Dorsolateral prefrontal cortex (tissue), 120 donors: ENCODE measurements at regions of chr9 and their contacts with region 1.

Region 1: GRCh38 chr9:16119261-16120230 is 566.7 kb downstream of the CCDC171 start:
- DNase-seq: no peak
- H3K4me3 ChIP-seq: no peak overlapping the region
- H3K27ac ChIP-seq: peak overlapping the region in 1 of 59 donors; percentile 9
- H3K27me3 ChIP-seq: no peaks in the 10 kb centered on the region
- CTCF ChIP-seq: no peak

Region 2: DNA sequence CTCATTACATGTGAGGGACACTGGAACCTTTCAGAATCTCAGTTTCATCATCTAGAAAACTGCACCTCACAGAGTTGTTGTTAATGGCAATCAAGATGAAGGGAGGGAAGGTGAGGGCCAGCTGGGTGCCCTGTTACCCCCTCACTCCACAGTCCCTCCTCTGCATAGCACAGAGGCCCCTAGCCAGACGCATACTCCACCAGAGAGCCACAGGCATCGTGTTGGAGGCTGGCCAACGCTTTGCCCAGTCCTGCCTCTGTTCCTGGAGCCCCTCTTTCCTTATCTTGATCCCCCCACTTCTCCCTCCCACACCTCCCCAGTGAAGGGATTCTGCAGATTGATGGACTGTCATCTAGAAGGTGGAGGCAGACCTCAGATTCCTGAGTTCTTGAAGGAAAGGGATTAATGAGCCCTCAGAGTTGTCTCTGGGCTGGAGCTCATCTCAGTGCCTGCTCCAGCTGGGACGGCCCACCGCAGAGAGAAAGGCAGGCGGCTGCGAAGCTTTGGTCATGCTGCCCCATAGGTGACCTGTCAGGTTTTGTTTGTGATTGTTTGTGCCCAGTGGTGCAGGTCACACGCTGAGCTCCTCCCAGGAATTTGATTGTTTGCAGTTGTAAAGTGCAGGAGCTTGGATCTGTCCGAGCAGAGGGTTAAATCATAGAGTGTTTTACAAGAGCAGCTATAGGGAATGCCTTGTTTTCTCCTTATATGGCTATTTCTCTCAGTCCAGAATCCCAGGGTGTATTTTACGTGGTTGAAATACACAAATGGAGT is 79.4 kb before region 1 on chr9:
- intact Hi-C with region 1: loop called in 1 of 2 experiments (anchors 10 kb)
- DNase-seq: no peak
- H3K4me3 ChIP-seq: no peak overlapping the region
- H3K27ac ChIP-seq: peak overlapping the region in 1 of 59 donors; percentile 3
- H3K27me3 ChIP-seq: no peaks in the 10 kb centered on the region
- CTCF ChIP-seq: no peak